ENCODE measurements at regions of chr17 and their contacts with region 1.

Region 1: GRCh38 chr17:27310565-27311110 is 16.7 kb downstream of the WSB1 start:
- DNase-seq: no peak
- ATAC-seq: no peak
- H3K4me3 ChIP-seq: no peak overlapping the region
- H3K27ac ChIP-seq: no peak overlapping the region
- H3K4me1 ChIP-seq: peaks cover 0 to 36% (median 13%) of the 10 kb centered on the region in 9 donors
- H3K27me3 ChIP-seq: no peaks in the 10 kb centered on the region
- CTCF ChIP-seq: no peak

Region 2: DNA sequence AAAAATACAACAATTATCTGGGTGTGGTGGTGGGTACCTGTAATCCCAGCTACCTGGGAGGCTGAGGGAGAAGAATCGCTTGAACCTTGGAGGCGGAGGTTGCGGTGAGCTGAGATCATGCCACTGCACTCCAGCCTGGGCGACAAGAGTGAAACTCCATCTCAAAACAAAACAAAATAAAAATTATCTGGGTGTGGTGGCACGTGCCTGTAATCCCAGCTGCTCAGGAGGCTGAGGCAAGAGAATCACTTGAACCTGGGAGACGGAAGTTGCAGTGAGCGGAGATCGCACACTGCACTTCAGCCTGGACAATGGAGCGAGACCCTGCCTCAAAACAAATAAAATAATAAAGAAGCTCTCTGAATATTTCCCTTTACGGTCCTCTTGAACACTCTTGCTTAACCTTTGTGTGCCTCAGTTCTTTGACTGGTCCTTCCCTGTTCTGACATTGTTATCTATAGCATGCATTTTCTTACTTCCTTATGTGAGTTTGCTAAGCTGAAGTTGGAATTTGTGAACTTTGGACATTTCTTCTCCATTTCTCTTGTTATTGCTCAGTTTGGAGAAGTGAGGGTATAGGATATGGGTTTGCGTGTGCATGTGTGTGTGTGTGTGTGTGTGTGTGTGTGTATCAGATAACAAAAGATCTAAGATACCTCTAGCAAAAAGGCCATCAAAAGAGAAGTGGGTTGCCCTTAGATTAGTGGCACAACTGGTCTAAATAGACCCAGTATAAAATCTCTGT is 46.4 kb before region 1 on chr17:
- intact Hi-C with region 1: loop called in 1 of 10 experiments (anchors 5 kb)
- DNase-seq: no peak
- ATAC-seq: no peak
- H3K4me3 ChIP-seq: no peak overlapping the region
- H3K27ac ChIP-seq: peak overlapping the region in 5 of 10 donors; percentile 22 to 73 (median 51)
- H3K4me1 ChIP-seq: peaks cover 0 to 60% (median 25%) of the 10 kb centered on the region in 9 donors
- H3K27me3 ChIP-seq: no peaks in the 10 kb centered on the region
- CTCF ChIP-seq: no peak